Panc1 (cell line): ENCODE measurements at regions of chr15 and their contacts with region 1.

Region 1: GRCh38 chr15:26179906-26180305 is 316.8 kb upstream of the ATP10A start:
- DNase-seq: no peak
- ATAC-seq: no peak
- H3K4me3 ChIP-seq: no peak overlapping the region
- H3K27ac ChIP-seq: no peak overlapping the region
- H3K4me1 ChIP-seq: no peaks in the 10 kb centered on the region
- H3K27me3 ChIP-seq: no peaks in the 10 kb centered on the region
- CTCF ChIP-seq: peak; percentile 24; the same call in 1 of the 2 replicates

Region 2: DNA sequence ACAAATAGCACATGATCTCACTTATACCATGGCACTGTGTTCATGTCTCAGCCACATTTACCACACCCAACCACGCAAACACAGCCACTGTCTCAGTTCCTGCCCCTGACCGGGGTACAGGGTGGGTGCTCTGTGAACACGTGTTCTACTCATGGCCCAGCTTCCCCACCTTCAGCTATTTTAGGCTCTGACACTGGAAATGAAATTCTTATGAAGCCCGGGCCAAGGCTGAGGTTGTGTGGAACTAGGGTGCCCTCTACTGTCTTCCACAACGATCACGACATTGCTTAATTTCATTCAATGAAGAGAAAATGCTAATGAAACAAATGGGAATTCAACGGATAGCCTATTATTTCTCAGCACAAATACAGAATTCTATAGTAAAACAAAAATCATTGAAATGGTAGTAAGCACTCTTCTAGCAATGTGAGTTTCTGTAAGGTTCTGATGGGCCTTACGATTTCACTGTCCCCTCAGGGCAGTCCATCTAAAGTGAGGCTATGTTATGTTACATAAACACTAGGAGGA is 684.8 kb after region 1 on chr15:
- CTCF ChIA-PET with region 1: no interaction called
- POLR2A ChIA-PET with region 1: no interaction called
- in situ Hi-C with region 1: no loop called
- intact Hi-C with region 1: loop called (anchors 10 kb)
- DNase-seq: no peak
- ATAC-seq: peak; percentile 69
- H3K4me3 ChIP-seq: no peak overlapping the region
- H3K27ac ChIP-seq: no peak overlapping the region
- H3K4me1 ChIP-seq: no peaks in the 10 kb centered on the region
- H3K27me3 ChIP-seq: no peaks in the 10 kb centered on the region
- CTCF ChIP-seq: peak; percentile 77